Natural killer cell (primary cell): ENCODE measurements at regions of chr6 and their contacts with region 1.

Region 1: GRCh38 chr6:106512048-106512967 is 117.0 kb downstream of the RTN4IP1 start:
- DNase-seq: peak; percentile 77 to 92
- ATAC-seq: peak; percentile 80 to 90 (median 87)
- H3K4me3 ChIP-seq: peak overlapping the region; percentile 91
- H3K4me3 Mint-ChIP-seq: peak overlapping the region; percentile 88
- H3K27ac ChIP-seq: peak overlapping the region; percentile 93
- H3K27ac Mint-ChIP-seq: peak overlapping the region; percentile 73 to 95
- H3K4me1 ChIP-seq: peaks cover 46% of the 10 kb centered on the region
- H3K4me1 Mint-ChIP-seq: peaks cover 50 to 53% of the 10 kb centered on the region in 2 donors
- H3K27me3 ChIP-seq: peaks cover 5% of the 10 kb centered on the region
- H3K27me3 Mint-ChIP-seq: peaks cover 25 to 32% of the 10 kb centered on the region in 2 donors
- CTCF ChIP-seq: peak; percentile 14

Region 2: DNA sequence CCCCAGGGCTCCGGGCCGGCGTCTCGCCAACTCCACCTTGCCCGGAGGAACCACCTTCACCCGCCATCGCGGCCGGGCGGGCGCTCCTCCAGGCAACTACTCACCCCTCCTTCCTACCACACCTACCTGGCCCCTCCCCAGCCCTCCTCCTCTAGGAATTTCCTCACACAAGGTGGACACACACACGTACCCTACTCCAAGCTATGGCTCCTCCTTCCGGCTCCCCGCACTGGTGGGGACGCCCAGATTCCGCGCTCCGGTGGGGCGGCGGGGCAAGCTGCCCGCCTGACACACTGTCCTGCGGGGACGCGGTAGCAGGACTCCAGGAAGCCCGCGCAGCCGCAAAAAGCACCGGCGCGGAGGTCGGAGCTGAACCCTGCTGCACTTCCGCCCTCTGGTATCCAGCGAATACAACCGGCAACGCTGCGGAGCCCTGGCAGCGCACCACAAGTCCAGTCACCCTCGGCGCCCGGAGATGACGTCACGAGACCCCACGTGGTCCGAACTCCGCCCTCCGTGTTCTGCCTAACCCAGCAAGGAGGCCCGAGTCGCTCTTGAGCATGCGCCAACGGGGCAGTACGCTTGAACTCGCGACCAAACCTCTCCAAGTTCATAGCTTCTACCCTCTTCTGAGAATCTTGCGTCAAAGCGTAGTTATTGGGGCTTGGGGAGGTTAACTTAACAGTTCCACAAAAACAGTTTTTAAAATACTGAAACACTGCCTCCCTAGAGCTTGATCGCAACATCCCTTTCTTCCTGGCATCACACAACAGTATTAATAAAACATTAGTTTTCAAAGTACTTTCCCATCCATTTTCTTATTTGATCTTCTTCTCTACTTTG is 186.8 kb before region 1 on chr6 and contains the start of gene ATG5:
- intact Hi-C with region 1: loop called (anchors 5 kb)
- DNase-seq: peak; percentile 100
- ATAC-seq: peak; percentile 93 to 98 (median 95)
- H3K4me3 ChIP-seq: peak within 1 kb of the TSS; percentile 95
- H3K4me3 Mint-ChIP-seq: peak within 1 kb of the TSS; percentile 99
- H3K27ac ChIP-seq: peak within 1 kb of the TSS; percentile 90
- H3K27ac Mint-ChIP-seq: peak within 1 kb of the TSS; percentile 94 to 100
- H3K4me1 ChIP-seq: peaks cover 18% of the 10 kb centered on the region
- H3K4me1 Mint-ChIP-seq: peaks cover 46 to 53% of the 10 kb centered on the region in 2 donors
- H3K27me3 ChIP-seq: peaks cover 3% of the 10 kb centered on the region
- H3K27me3 Mint-ChIP-seq: peaks cover 20 to 22% of the 10 kb centered on the region in 2 donors
- CTCF ChIP-seq: no peak
- total RNA-seq, gene ATG5: 27.5 to 39.0 (median 35.4) TPM

Region 3: DNA sequence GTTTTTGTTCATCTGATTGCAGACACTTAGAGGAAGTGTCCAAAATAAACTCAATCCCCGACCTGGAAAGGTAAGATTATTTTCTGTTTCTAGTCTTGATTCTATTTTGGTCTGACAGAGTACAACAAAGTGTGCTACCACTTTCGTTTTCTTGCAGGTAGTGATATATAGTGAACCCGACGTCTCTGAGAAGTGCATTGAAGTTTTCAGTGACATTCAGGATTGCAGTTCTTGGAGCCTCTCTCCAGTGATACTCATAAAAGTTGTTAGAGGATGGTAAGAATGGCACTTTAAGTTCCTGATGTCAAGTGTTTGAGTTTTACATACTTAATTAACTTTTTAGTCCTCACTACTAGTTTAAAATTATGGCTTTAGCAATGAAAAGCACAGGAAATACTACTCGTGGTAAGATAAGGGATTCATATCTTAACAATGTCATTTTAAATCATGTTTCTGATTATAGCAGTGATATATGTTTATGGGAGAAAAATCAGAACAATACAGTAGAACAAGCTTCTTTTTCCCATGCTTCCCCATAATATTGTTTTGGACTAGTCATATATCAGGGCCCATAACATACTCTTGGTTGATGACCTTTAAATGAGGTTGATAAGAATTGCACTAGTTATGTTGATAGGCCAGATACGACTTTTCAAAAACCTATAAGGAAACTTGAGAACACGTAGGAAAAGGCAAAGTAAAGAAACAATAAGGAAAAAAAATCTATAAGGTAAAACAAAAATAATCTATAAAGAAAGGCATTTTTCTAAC is 13.0 kb after region 1 on chr6:
- intact Hi-C with region 1: loop called (anchors 1 kb)
- DNase-seq: peak in 1 of 2 donors; percentile 71
- ATAC-seq: peak; percentile 27 to 33 (median 29)
- H3K4me3 ChIP-seq: peak overlapping the region; percentile 17
- H3K4me3 Mint-ChIP-seq: peak overlapping the region; percentile 89
- H3K27ac ChIP-seq: peak overlapping the region; percentile 93
- H3K27ac Mint-ChIP-seq: peak overlapping the region; percentile 91 to 95
- H3K4me1 ChIP-seq: peaks cover 23% of the 10 kb centered on the region
- H3K4me1 Mint-ChIP-seq: peaks cover 37 to 59% of the 10 kb centered on the region in 2 donors
- H3K27me3 ChIP-seq: no peaks in the 10 kb centered on the region
- H3K27me3 Mint-ChIP-seq: no peaks in the 10 kb centered on the region
- CTCF ChIP-seq: no peak